PC-3 (cell line): ENCODE measurements at regions of chr7 and their contacts with region 1.

Region 1: DNA sequence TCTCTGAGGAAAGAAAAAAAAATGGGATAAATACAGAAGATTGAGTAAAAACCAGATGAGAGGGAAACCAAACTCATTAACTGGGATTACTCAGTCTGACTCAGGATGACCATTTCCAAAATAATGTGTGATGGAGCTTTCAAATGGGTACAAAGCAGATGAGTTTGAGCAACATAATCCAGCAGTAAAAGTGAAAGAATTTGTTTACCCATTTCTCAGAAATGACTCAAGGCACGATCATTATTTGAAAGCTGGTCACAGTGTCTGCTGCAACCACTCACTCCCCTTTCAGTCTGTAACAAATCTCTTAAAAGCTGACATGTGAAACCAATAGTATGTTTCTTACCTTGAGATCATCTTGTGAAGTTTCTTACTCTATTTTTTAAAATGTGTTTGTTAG is 104.7 kb upstream of the KLF14 start:
- DNase-seq: peak; percentile 98
- ATAC-seq: peak; percentile 89
- H3K4me3 ChIP-seq: no peak overlapping the region
- H3K27ac ChIP-seq: peak overlapping the region; percentile 85
- H3K4me1 ChIP-seq: peaks cover 30% of the 10 kb centered on the region
- H3K27me3 ChIP-seq: no peaks in the 10 kb centered on the region
- CTCF ChIP-seq: no peak

Region 2: DNA sequence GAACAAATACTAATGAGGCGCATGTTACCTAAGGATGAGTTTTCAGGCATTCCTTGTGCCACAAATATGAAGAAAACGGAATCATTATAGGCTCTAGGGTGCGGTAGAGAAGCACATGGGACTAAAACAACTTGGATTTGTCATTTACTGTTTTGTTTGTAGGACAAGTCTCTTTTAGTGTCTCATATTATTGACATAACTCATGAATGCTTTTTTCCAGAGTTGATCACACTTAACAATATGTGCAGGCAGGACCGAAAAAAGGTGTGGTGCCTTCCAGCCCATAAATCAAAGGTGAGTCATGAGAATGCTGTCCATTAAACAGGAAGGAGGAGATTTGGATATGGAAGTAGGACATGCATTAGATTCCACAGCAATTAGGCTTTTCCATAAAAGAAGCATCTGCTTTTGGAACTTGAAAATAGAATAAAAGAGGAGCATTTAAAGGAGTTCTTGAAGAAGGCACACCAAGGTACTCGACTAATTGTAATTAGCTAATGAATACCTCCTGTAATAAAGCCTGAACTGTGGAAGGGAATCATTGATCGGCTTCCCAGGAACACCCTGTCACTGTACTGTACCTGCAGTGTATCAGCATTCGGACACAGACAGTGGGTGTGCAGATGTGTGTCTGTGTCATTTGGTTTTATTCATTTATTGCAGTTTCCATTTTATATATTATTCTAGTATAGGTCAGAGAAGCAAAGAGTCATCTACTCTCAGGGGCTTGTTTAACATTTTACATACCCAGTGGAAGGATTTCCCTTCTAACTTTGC is 15.0 kb after region 1 on chr7:
- CTCF ChIA-PET with region 1: no interaction called
- POLR2A ChIA-PET with region 1: interaction called, 5 read pairs
- intact Hi-C with region 1: loop called (anchors 1 kb)
- DNase-seq: peak; percentile 96
- ATAC-seq: peak; percentile 86
- H3K4me3 ChIP-seq: peak overlapping the region; percentile 36; the same call in 1 of the 2 replicates
- H3K27ac ChIP-seq: peak overlapping the region; percentile 86
- H3K4me1 ChIP-seq: peaks cover 34% of the 10 kb centered on the region
- H3K27me3 ChIP-seq: no peaks in the 10 kb centered on the region
- CTCF ChIP-seq: peak; percentile 47; the same call in 1 of the 2 replicates

Region 3: DNA sequence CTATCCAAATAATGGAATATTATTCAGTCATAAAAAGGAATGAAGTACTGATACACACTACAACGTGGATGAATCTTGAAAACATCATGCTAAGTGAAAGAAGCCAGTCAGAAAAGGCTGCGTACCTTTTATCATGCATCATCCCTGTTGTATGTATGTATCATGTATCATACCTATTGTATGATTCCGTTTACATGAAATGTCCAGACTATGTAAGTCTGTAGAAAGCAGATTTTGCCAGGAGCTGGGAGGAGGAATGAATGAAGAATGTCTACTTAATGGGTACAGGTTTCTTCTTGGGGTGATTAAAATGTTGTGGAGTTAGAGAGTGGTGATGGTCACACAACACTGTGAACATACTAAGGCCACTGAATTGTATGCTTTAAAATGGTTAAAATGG is 31.2 kb after region 1 on chr7:
- CTCF ChIA-PET with region 1: no interaction called
- POLR2A ChIA-PET with region 1: no interaction called
- intact Hi-C with region 1: loop called (anchors 2 kb)
- DNase-seq: no peak
- ATAC-seq: no peak
- H3K4me3 ChIP-seq: no peak overlapping the region
- H3K27ac ChIP-seq: no peak overlapping the region
- H3K4me1 ChIP-seq: peaks cover 14% of the 10 kb centered on the region
- H3K27me3 ChIP-seq: no peaks in the 10 kb centered on the region
- CTCF ChIP-seq: no peak